Caki2 (cell line): ENCODE measurements at regions of chr2 and their contacts with region 1.

Region 1: DNA sequence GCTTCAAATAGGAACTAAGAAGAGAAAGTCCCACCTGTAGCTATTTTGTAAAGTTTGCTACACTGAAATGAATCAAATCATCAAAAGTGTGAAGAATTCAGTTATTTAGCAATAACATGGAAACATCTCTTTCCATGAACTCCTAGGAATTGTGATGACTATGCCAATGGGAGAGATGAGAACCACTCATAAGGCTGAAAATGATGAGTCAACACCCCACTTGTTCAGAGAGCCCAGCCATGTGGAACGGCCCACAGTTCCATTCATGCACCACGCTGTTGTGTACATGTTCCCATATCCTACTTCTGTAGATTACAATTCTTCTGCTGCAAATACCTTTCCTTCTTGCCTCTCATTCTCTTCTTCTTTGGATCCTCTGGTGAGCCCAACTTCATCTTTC is 645.5 kb upstream of the ID2 start:
- DNase-seq: peak; percentile 41

Region 2: DNA sequence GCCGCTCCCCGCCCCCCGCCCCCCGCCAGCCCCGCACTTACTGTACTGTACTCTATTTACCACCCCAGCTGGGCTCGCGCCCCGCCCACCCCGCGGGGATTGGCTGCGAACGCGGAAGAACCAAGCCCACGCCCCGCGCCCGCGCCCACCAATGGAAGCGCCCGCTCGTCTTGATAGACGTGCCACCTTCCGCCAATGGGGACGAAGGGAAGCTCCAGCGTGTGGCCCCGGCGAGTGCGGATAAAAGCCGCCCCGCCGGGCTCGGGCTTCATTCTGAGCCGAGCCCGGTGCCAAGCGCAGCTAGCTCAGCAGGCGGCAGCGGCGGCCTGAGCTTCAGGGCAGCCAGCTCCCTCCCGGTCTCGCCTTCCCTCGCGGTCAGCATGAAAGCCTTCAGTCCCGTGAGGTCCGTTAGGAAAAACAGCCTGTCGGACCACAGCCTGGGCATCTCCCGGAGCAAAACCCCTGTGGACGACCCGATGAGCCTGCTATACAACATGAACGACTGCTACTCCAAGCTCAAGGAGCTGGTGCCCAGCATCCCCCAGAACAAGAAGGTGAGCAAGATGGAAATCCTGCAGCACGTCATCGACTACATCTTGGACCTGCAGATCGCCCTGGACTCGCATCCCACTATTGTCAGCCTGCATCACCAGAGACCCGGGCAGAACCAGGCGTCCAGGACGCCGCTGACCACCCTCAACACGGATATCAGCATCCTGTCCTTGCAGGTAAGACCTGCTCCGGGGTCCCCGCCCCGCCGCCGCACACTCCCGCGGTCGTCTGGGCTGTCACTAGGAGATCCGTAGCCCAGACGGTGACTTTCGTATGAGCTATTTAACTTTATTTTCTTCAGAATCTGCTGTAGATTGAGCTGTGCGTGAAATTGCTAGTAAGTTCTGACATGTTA is 645.7 kb after region 1 on chr2 and contains the start of gene ID2:
- in situ Hi-C with region 1: loop called (anchors 10 kb)
- DNase-seq: peak; percentile 99
- total RNA-seq, gene ID2: 65.9 and 90.3 TPM in 2 replicates